CD8-positive, alpha-beta T cell (primary cell): ENCODE measurements at regions of chr2 and their contacts with region 1.

Region 1: GRCh38 chr2:221573430-221574230 is 1.5 kb upstream of the EPHA4 start:
- DNase-seq: peak; percentile 60 to 90 (median 81)
- ATAC-seq: peak; percentile 42
- H3K4me3 ChIP-seq: peak overlapping the region; percentile 71 to 92
- H3K4me3 Mint-ChIP-seq: peak overlapping the region; percentile 83
- H3K27ac ChIP-seq: no peak overlapping the region
- H3K27ac Mint-ChIP-seq: no peak overlapping the region
- H3K4me1 ChIP-seq: peaks cover 33% of the 10 kb centered on the region
- H3K4me1 Mint-ChIP-seq: peaks cover 29% of the 10 kb centered on the region
- H3K27me3 ChIP-seq: peaks cover 15 to 21% of the 10 kb centered on the region in 2 experiments
- H3K27me3 Mint-ChIP-seq: peaks cover 50% of the 10 kb centered on the region
- CTCF ChIP-seq: peak; percentile 95

Region 2: GRCh38 chr2:219642465-219643080 is 1931.1 kb before region 1 on chr2:
- CTCF ChIA-PET with region 1: no interaction called
- POLR2A ChIA-PET with region 1: no interaction called
- intact Hi-C with region 1: loop called in 1 of 2 experiments (anchors 5 kb)
- DNase-seq: peak; percentile 76 to 95 (median 89)
- ATAC-seq: peak; percentile 100
- H3K4me3 ChIP-seq: no peak overlapping the region
- H3K4me3 Mint-ChIP-seq: no peak overlapping the region
- H3K27ac ChIP-seq: no peak overlapping the region
- H3K27ac Mint-ChIP-seq: no peak overlapping the region
- H3K4me1 ChIP-seq: no peaks in the 10 kb centered on the region
- H3K4me1 Mint-ChIP-seq: peaks cover 7% of the 10 kb centered on the region
- H3K27me3 ChIP-seq: peaks cover 0 to 1% of the 10 kb centered on the region in 2 experiments
- H3K27me3 Mint-ChIP-seq: peaks cover 33% of the 10 kb centered on the region
- CTCF ChIP-seq: peak; percentile 99

Region 3: DNA sequence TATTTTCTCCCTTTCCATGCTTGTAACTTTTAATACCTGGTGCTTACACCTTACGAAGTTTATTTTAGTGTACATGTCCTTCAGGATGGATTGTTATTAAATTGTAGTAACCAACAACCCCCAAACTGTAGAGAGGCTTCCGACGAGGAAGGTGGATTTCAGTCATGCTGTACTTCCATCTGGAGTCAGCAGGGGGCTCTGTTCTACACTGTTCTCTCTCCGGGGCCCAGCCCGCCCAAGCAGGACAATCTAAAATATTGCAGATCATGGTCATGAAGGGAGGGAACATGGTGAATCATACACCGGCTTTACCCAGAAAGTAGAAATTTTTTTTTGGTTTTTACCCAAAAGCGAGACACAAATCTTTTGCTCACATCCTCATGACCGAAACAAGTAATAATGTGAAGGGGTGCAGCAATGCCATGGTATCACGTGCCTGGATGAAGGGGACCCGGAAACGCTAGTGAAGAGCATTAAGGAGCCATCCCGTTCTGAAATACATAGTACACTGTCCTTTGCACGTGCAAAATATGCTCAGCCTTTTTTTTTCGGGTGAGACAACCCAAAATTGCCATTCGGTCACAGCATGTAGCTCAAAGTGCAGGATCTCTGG is 886.3 kb before region 1 on chr2:
- CTCF ChIA-PET with region 1: interaction called, 22 read pairs
- POLR2A ChIA-PET with region 1: no interaction called
- intact Hi-C with region 1: loop called in 1 of 2 experiments (anchors 1 kb)
- DNase-seq: peak; percentile 5 to 67 (median 50)
- ATAC-seq: peak; percentile 80
- H3K4me3 ChIP-seq: no peak overlapping the region
- H3K4me3 Mint-ChIP-seq: no peak overlapping the region
- H3K27ac ChIP-seq: no peak overlapping the region
- H3K27ac Mint-ChIP-seq: no peak overlapping the region
- H3K4me1 ChIP-seq: no peaks in the 10 kb centered on the region
- H3K4me1 Mint-ChIP-seq: no peaks in the 10 kb centered on the region
- H3K27me3 ChIP-seq: no peaks in the 10 kb centered on the region
- H3K27me3 Mint-ChIP-seq: peaks cover 8% of the 10 kb centered on the region
- CTCF ChIP-seq: peak; percentile 78

Region 4: GRCh38 chr2:221429741-221430491 is 143.7 kb before region 1 on chr2:
- CTCF ChIA-PET with region 1: no interaction called
- POLR2A ChIA-PET with region 1: no interaction called
- intact Hi-C with region 1: loop called in 1 of 2 experiments (anchors 5 kb)
- DNase-seq: no peak
- ATAC-seq: no peak
- H3K4me3 ChIP-seq: no peak overlapping the region
- H3K4me3 Mint-ChIP-seq: no peak overlapping the region
- H3K27ac ChIP-seq: no peak overlapping the region
- H3K27ac Mint-ChIP-seq: no peak overlapping the region
- H3K4me1 ChIP-seq: no peaks in the 10 kb centered on the region
- H3K4me1 Mint-ChIP-seq: no peaks in the 10 kb centered on the region
- H3K27me3 ChIP-seq: no peaks in the 10 kb centered on the region
- H3K27me3 Mint-ChIP-seq: no peaks in the 10 kb centered on the region
- CTCF ChIP-seq: no peak

Region 5: DNA sequence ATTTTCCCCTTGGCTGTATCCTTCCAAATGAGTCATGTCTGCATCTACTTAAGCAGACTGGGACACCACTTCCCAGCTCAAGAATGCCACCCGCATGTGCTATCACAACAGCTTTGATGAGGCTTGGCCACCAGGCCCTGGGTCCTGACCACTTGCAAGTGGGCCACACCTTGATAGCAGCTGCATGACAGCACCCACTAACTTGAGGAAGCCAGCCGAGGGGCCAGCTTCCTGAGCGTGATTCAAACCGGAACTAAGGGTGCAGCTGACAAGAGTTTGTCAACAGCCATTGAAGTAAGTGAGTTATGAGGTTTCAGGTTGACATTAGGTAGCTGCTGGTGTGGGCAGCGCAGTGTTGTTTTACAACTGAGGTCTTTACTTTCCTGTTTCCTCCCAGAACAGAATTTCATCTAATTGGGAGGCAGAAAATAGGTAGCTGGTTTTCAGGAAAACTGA is 55.9 kb before region 1 on chr2:
- CTCF ChIA-PET with region 1: interaction called, 5 read pairs
- POLR2A ChIA-PET with region 1: interaction called, 21 read pairs
- intact Hi-C with region 1: loop called (anchors 1 kb)
- DNase-seq: peak; percentile 61 to 93 (median 77)
- ATAC-seq: peak; percentile 68
- H3K4me3 ChIP-seq: peak overlapping the region in 1 of 2 experiments; percentile 37
- H3K4me3 Mint-ChIP-seq: no peak overlapping the region
- H3K27ac ChIP-seq: peak overlapping the region; percentile 80 to 87
- H3K27ac Mint-ChIP-seq: no peak overlapping the region
- H3K4me1 ChIP-seq: peaks cover 42% of the 10 kb centered on the region
- H3K4me1 Mint-ChIP-seq: no peaks in the 10 kb centered on the region
- H3K27me3 ChIP-seq: no peaks in the 10 kb centered on the region
- H3K27me3 Mint-ChIP-seq: no peaks in the 10 kb centered on the region
- CTCF ChIP-seq: no peak